GM13976 (cell line): ENCODE measurements at regions of chr18 and their contacts with region 1.

Region 1: GRCh38 chr18:3995476-3996102 is 459.5 kb downstream of the DLGAP1 start:
- DNase-seq: peak; percentile 32
- CTCF ChIP-seq: peak; percentile 72

Region 2: GRCh38 chr18:3297025-3297984 is 698.3 kb before region 1 on chr18:
- in situ Hi-C with region 1: loop called (anchors 25 kb)
- DNase-seq: peak; percentile 82
- CTCF ChIP-seq: peak; percentile 93

Region 3: DNA sequence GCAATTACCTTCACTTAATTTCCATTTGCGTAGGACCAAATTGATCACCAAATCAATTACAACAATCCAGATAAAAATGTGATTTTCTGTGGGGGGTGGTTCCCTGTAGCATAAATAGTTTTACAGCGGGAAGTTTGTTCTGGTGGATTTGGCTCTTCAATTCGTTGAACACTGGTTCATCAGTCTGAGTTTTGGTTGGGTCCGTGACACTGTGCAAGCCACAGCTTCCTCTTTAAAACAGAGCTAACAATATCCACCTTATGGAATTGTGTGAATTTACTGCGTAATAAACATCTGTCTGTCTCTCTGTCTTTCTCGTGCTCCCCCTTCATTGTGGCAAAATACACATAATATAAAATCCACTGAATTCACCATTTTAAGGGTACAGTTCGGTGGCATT is 234.8 kb before region 1 on chr18:
- in situ Hi-C with region 1: no loop called
- DNase-seq: no peak
- CTCF ChIP-seq: no peak

Region 4: DNA sequence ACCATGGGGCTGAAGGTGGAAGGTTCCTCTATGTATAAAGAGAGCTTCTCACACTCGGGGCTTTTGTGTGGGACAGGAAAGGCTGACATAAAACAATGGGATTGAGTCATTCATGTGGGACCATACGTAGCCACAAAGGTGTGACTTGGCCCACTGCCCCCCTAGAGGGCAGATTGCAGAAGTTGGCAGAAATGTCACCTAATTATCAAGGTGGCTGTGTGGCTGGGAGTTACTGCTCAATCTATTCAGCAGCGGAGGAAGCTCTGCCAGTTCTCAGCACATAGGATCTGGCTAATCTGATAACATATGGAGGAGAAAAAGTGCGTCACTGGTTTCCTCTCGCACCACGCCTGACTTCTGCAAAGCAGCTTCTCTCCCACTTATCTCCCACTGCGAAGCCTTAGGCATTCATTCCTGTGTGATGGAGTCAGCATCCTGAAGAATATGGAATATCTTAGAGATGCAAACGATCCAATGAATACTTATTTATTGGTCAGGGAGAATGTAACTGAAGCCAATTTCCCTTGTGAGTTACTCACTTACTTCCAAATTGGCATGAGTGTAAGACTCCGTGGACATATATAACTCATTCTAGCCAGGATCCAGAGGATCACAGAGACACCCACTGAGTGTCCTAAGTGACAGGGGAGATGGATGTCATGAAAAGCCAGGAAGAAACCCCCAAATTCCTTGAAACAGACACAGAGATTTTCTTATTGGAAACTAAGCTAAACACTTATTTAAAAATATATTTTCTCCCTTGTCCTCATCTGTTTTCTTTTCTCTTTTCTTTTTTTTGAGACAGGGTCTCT is 200.8 kb before region 1 on chr18:
- in situ Hi-C with region 1: loop called (anchors 25 kb)
- DNase-seq: no peak
- CTCF ChIP-seq: no peak

Region 5: DNA sequence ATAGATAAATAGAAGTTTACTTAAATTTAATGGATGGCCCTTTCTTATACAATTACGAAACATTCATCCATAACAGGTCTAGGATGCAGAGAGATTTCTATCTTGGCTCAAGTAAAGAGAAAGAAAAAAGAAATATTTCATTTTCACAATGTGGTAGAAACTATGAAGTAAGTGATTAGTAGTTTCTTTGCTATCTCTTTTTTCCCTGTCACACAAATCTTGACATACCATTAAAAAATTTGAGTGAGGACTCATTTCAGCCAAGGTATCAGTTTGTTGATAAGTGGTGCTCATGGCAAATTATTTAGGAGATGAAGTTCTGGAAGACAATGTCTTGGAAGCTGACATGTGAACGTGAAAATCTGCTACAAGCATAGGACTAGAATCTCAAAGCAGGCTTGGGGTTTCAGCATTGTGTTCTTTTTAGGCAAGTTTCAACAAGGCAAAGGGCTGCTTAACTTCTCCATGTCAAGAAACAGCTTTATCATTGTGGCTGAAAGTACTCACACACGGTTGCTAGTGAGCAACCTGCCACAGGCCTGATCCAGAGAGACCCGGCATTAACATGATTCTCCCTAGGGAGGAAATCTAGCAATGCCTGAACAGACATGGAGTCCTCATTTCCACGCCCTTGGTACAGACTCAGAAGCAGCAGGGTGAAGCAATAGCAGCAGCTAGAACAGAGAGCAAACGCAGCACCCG is 45.0 kb after region 1 on chr18:
- in situ Hi-C with region 1: no loop called
- DNase-seq: no peak
- CTCF ChIP-seq: no peak

Region 6: GRCh38 chr18:4119813-4120212 is 124.2 kb after region 1 on chr18:
- in situ Hi-C with region 1: no loop called
- DNase-seq: no peak
- CTCF ChIP-seq: no peak

Region 7: DNA sequence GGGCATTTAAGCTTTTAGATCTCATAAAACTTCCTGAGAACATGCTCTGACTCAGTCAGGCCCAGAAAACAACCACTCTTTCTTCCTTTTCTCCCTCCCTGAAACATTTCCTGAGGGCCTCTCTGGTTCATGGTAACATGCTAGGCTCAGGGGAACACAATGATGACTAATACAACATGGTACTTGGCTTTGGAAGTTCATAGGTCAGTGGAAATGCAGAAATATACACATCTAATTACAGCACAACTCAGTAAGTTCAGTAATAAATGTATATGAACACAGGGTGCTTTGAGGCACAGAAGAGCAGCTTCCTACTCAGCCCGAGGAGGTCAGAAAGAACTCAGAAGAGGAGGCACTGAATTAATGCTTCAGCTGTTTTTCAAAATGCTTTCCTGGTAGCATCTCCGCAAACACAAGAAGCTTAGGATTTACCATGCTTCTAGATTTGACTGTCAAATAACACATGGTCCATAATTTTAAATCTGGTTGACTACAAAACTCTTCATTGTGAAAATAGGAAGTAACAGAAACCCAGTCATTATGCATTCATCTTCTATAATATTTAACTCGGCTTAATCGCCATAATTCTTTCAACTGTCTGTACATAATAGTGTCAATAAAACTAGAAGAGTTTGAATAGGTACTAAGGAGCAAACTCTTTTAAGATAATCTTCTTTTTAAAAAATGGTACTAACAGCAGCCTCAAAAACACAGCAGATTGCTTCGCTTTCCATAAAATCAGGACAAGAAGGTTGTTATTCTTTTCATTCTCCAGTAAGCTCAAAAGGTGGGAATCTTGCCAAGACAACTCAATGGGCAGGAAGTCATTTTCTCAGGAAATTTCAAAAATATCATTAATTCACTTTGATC is 208.2 kb after region 1 on chr18:
- in situ Hi-C with region 1: no loop called
- DNase-seq: no peak
- CTCF ChIP-seq: no peak